Activated CD8-positive, alpha-beta T cell treated with anti-CD3 and anti-CD28 coated beads, Interleukin-2, amount 10 ng/mL, durations not matched to agents 7 days and 5 days (primary cell): ENCODE measurements at regions of chr14 and their contacts with region 1.

Region 1: DNA sequence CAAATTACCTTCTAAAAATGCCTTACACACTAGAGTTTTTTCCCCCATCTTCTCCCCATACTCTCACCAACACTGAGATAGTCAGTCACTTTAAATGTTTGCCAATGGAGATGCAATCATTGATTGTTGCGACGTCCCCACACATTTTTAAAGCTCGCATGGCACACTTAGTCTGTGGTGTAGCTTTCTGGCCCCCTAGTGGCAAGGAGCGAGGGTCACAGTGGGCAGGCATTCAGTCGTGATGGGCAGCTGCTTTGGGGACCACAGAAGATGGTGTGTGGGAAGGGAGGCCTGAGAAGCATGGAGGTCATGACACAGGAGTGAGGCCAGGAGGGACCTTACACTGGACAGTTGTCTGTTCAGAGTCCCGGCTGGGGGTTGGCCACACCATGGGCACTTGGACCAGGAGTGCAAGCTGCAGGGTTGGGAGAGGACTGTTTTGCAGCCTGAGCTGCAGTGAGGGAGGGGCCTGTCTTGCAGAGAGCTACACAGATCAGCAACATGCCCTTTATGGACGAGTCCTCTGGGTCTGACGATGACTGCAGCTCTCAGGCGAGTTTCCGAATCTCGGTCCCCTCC is 28.7 kb downstream of the PIGH start:
- DNase-seq: peak; percentile 81
- ATAC-seq: peak; percentile 92
- H3K4me3 Mint-ChIP-seq: no peak overlapping the region
- H3K27ac Mint-ChIP-seq: no peak overlapping the region
- H3K4me1 Mint-ChIP-seq: peaks cover 8% of the 10 kb centered on the region
- H3K27me3 Mint-ChIP-seq: peaks cover 3% of the 10 kb centered on the region

Region 2: DNA sequence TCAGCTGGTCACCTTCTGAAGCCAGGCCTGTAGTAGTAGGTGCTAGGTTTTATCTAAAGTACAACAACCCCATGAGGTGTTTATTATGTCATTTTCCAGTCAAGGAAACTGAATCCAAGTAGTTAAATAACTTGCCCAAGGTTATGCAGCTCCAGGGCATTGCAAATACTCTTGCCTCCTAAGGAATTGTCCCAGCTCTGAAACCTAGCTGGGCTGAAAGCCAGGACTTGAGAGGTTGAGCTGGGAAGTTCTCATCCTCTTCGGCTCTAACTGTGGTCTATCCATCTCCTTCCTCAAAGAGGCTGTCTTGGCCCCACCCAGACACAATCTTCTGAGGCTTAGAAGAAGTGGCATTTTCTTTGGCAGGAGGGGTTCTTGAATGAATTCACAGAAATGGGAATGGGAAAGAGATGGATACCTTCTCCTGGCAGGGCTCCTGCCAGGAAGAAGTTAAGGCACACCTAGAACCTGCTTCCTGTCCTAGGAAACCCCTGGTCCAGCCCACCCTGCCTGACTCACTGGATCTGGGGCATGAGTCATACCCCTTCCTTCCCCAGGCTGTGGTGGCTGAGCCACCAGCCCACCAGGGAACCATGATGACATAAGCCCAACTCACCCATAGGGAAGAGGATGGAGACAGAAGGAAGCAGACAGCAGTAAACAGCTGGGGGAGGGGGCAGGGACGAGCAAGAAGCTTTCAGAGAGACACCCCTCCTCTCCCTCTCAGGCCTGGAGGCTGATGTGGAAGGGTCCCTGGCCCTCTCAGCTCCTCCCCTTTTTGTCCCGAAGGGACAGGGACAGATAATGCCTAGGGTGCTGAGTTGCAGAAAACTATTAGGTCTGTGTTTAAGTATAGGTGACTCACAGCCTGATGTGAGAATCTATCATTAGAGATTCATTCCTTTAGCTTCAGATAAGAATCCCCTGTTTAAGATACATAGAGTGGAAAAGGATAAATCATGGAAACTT is 157.3 kb before region 1 on chr14:
- CTCF ChIA-PET with region 1: interaction called, 10 read pairs
- POLR2A ChIA-PET with region 1: no interaction called
- DNase-seq: peak; percentile 32
- ATAC-seq: peak; percentile 38
- H3K4me3 Mint-ChIP-seq: no peak overlapping the region
- H3K27ac Mint-ChIP-seq: peak overlapping the region; percentile 46
- H3K4me1 Mint-ChIP-seq: peaks cover 20% of the 10 kb centered on the region
- H3K27me3 Mint-ChIP-seq: peaks cover 27% of the 10 kb centered on the region

Region 3: DNA sequence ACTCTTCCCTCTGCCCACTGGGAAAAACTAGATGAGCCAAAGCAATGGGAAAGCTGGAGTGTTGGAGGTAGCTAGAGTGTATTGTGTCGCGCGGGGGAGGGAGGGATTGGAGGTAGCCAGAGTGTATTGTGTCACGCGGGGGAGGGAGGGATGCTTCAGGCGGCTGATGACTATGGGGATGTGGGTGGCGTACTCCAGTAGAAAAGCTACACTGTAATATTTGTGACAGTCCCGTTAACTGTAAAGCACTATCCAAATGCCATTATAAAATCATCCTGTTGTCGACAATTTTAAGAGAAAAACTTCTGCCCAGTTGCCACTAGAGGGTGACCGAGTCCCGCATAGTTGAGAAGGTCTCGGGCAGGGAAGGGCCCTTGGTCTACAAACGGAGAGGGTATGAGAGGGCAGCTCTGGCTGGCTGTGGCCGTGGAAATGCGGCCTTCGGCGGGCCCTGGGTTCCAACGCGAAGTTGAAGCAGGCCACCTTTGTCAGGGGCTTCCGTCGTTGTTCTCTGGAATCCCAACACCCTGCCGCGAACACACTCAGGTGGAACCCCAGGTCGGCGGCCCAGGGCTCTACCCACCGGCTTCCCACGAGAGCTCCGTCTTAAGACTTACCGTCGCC is 144.3 kb before region 1 on chr14:
- CTCF ChIA-PET with region 1: interaction called, 177 read pairs
- POLR2A ChIA-PET with region 1: interaction called, 6 read pairs
- DNase-seq: peak; percentile 81
- ATAC-seq: peak; percentile 85
- H3K4me3 Mint-ChIP-seq: no peak overlapping the region
- H3K27ac Mint-ChIP-seq: no peak overlapping the region
- H3K4me1 Mint-ChIP-seq: peaks cover 7% of the 10 kb centered on the region
- H3K27me3 Mint-ChIP-seq: peaks cover 31% of the 10 kb centered on the region

Region 4: GRCh38 chr14:67500981-67501380 is 70.4 kb before region 1 on chr14:
- CTCF ChIA-PET with region 1: no interaction called
- POLR2A ChIA-PET with region 1: no interaction called
- DNase-seq: no peak
- ATAC-seq: no peak
- H3K4me3 Mint-ChIP-seq: no peak overlapping the region
- H3K27ac Mint-ChIP-seq: no peak overlapping the region
- H3K4me1 Mint-ChIP-seq: peaks cover 17% of the 10 kb centered on the region
- H3K27me3 Mint-ChIP-seq: peaks cover 6% of the 10 kb centered on the region

Region 5: GRCh38 chr14:67526676-67527459 is 44.5 kb before region 1 on chr14:
- CTCF ChIA-PET with region 1: interaction called, 77 read pairs
- POLR2A ChIA-PET with region 1: interaction called, 4 read pairs
- DNase-seq: peak; percentile 60
- ATAC-seq: peak; percentile 83
- H3K4me3 Mint-ChIP-seq: no peak overlapping the region
- H3K27ac Mint-ChIP-seq: no peak overlapping the region
- H3K4me1 Mint-ChIP-seq: no peaks in the 10 kb centered on the region
- H3K27me3 Mint-ChIP-seq: peaks cover 56% of the 10 kb centered on the region

Region 6: GRCh38 chr14:67557126-67557525 is 14.2 kb before region 1 on chr14:
- CTCF ChIA-PET with region 1: interaction called, 22 read pairs
- POLR2A ChIA-PET with region 1: no interaction called
- DNase-seq: no peak
- ATAC-seq: no peak
- H3K4me3 Mint-ChIP-seq: no peak overlapping the region
- H3K27ac Mint-ChIP-seq: no peak overlapping the region
- H3K4me1 Mint-ChIP-seq: peaks cover 2% of the 10 kb centered on the region
- H3K27me3 Mint-ChIP-seq: peaks cover 8% of the 10 kb centered on the region